Right cardiac atrium (tissue), 5 donors: ENCODE measurements at regions of chr3 and their contacts with region 1.

Region 1: GRCh38 chr3:100334488-100335351 is at the start of gene NIT2:
- DNase-seq: peak; percentile 88 to 95 (median 93)
- ATAC-seq: peak; percentile 97 to 98
- H3K4me3 ChIP-seq: peak within 1 kb of the TSS; percentile 84
- H3K27ac ChIP-seq: peak within 1 kb of the TSS; percentile 70
- H3K4me1 ChIP-seq: peaks cover 4% of the 10 kb centered on the region
- H3K27me3 ChIP-seq: no peaks in the 10 kb centered on the region
- total RNA-seq, gene NIT2: 32.1 to 44.3 (median 37.1) TPM

Region 2: DNA sequence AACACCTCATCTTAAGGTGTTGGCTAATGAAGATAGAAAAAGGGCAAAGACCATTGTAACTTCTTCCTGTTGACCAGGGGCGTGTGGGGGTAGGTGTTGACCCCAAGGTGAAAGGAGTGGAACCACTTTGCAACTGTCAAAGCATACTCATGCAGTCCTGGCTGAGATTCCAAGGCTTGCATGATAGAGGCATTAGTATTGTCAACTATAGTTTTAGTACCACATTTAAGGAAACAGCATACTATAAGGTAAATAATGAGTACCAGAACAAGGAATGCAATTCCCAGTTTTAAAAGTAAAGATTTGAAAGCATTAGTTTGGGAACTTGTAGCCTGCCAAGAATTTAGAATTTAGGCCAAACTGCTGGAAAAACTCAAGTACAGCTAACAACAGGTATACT is 246.9 kb after region 1 on chr3:
- intact Hi-C with region 1: loop called in 1 of 4 experiments (anchors 10 kb)
- DNase-seq: no peak
- ATAC-seq: no peak
- H3K4me3 ChIP-seq: no peak overlapping the region
- H3K27ac ChIP-seq: no peak overlapping the region
- H3K4me1 ChIP-seq: no peaks in the 10 kb centered on the region
- H3K27me3 ChIP-seq: no peaks in the 10 kb centered on the region